ENCODE measurements at regions of chr3 and their contacts with region 1.

Region 1: GRCh38 chr3:183766745-183767606 is 58.4 kb downstream of the MAP6D1 start:
- DNase-seq: peak; percentile 50 to 77
- H3K4me3 ChIP-seq: no peak overlapping the region
- H3K27ac ChIP-seq: no peak overlapping the region
- H3K4me1 ChIP-seq: no peaks in the 10 kb centered on the region
- H3K27me3 ChIP-seq: no peaks in the 10 kb centered on the region
- CTCF ChIP-seq: peak; percentile 78 to 91 (median 82)
- EP300 ChIP-seq: no peak
- POLR2A ChIP-seq: no peak
- RAD21 ChIP-seq: peak; percentile 89 to 92

Region 2: DNA sequence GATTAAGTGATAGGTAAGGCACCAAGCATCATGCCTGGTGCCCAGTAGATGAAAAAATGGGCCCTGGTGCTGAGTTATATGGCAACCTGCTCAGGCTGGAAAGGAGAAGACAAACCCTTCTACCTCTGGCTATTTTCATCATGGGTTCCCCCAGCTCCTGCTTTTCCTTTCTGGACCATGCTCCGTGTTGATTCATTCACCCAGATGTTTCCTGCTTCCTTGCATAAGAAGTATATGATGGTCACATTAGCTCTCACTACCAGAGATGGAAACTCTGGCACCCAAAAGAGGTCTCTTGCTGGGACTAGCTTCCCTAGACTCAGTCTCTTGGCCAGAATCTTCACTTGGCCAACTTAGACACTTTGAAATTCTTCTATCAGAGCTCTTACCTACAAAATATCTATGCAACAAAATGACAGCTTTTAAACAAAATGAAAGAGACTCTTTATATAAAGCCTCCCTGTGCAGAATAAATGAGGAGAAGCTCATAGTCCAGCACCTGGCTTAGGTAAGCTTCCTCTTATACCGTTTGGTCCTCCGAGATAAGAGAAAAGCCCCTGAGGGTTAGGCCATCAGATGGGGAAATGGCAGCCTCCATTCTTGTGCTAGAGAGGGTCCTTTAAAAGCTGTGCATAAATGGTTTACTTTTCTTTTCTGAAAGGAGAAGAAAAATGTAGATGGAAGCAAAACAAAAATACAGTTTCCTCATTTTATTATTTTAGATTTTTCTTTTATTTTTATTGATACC is 291.8 kb before region 1 on chr3:
- CTCF ChIA-PET with region 1: interaction called, 11 read pairs
- POLR2A ChIA-PET with region 1: no interaction called
- DNase-seq: no peak
- H3K4me3 ChIP-seq: no peak overlapping the region
- H3K27ac ChIP-seq: no peak overlapping the region
- H3K4me1 ChIP-seq: peaks cover 0 to 3% (median under 1%) of the 10 kb centered on the region in 4 experiments; a peak in 1 of 7 replicates
- H3K27me3 ChIP-seq: no peaks in the 10 kb centered on the region
- CTCF ChIP-seq: no peak
- EP300 ChIP-seq: no peak
- POLR2A ChIP-seq: no peak
- RAD21 ChIP-seq: no peak

Region 3: GRCh38 chr3:183688871-183689270 is 78.1 kb before region 1 on chr3:
- CTCF ChIA-PET with region 1: no interaction called
- POLR2A ChIA-PET with region 1: no interaction called
- DNase-seq: no peak
- H3K4me3 ChIP-seq: no peak overlapping the region
- H3K27ac ChIP-seq: no peak overlapping the region
- H3K4me1 ChIP-seq: no peaks in the 10 kb centered on the region
- H3K27me3 ChIP-seq: no peaks in the 10 kb centered on the region
- CTCF ChIP-seq: no peak
- EP300 ChIP-seq: no peak
- POLR2A ChIP-seq: no peak
- RAD21 ChIP-seq: no peak

Region 4: GRCh38 chr3:183754052-183754451 is 12.9 kb before region 1 on chr3:
- CTCF ChIA-PET with region 1: interaction called, 26 read pairs
- POLR2A ChIA-PET with region 1: interaction called, 3 read pairs
- DNase-seq: no peak
- H3K4me3 ChIP-seq: no peak overlapping the region
- H3K27ac ChIP-seq: no peak overlapping the region
- H3K4me1 ChIP-seq: peaks cover 0 to 4% (median 0%) of the 10 kb centered on the region in 4 experiments; a peak in 2 of 7 replicates
- H3K27me3 ChIP-seq: no peaks in the 10 kb centered on the region
- CTCF ChIP-seq: no peak
- EP300 ChIP-seq: no peak
- POLR2A ChIP-seq: no peak
- RAD21 ChIP-seq: no peak